ENCODE measurements at regions of chr15 and their contacts with region 1.

Region 1: GRCh38 chr15:47473832-47474231 is 243.5 kb upstream of the SEMA6D start:
- DNase-seq: peak; percentile 75
- ATAC-seq: peak; percentile 98

Region 2: GRCh38 chr15:47397655-47398054 is 76.2 kb before region 1 on chr15:
- intact Hi-C with region 1: loop called (anchors 5 kb)
- DNase-seq: no peak
- ATAC-seq: no peak

Region 3: DNA sequence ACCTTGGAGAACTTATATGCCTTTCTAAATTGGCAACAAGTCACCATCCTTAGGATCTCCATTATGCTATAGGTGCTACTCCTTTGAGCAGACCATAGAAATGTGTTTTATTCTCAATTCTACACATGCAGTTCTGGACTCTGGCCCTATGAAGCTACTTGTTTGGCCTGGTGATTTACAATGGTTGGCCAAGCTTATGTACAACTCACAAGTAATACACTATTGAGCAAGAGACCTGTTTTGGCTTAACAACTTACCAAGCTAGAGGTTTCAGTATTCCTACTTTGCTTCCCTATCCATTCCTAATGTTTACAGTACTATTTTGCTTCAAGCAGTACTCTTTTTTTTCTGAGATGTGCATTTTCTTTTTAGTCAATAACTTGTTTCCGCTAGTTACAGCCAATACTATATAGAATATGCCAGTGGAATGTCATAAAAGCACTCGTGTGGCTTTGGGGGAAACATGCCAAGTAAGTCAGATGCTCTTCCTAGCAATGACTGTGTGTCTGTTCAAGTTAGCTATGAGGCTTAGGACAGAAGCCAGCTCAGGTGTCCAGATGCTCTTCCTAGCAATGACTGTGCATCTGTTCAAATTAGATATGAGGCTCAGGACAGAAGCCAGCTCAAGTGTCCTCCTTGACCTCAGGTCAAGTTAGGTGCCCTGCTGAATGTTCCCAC is 68.6 kb after region 1 on chr15:
- intact Hi-C with region 1: no loop called
- DNase-seq: no peak
- ATAC-seq: no peak

Region 4: GRCh38 chr15:47717036-47717611 is 243.3 kb after region 1 on chr15 and contains the start of gene SEMA6D:
- intact Hi-C with region 1: loop called (anchors 10 kb)
- DNase-seq: peak; percentile 84
- ATAC-seq: peak; percentile 87
- total RNA-seq, gene SEMA6D: 17.7 TPM

Region 5: DNA sequence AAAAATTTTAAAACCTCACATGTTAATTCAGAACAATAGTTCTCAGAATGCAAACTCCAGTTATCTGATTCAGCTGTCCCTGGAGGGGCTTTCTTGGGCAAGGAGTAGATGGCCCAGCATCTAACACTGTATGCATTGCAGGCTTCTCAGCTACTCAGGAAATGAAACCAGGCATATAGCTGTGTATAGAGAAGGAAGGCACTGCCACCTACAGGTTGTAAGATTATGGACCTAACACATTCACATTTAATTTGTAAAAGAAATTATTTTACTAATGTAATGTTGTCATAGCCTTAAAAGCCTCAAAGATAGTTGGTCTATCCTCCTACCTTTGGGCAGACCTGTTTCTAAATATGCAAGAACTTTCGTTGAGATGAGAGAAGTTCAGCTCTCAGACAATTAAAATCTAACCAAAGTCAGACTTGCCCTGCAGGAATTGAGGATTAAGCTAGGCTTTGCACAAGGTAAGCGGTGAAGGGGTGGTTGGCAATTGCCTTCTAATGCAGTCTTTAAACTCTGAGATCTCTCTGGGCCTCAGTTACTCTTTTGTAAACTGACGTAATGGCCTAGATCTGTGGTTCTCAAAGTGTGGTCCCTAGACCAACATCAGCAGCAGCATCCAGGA is 514.2 kb after region 1 on chr15:
- intact Hi-C with region 1: loop called (anchors 5 kb)
- DNase-seq: no peak
- ATAC-seq: peak; percentile 84

Measured in Right ventricle myocardium inferior (tissue), 1 donor.